H1 (cell line): ENCODE measurements at regions of chr11 and their contacts with region 1.

Region 1: GRCh38 chr11:8365216-8365941 is 101.7 kb upstream of the LMO1 start:
- DNase-seq: peak in 1 of 2 experiments; percentile 71
- H3K4me3 ChIP-seq: no peak overlapping the region
- H3K27ac ChIP-seq: no peak overlapping the region
- H3K4me1 ChIP-seq: no peaks in the 10 kb centered on the region
- H3K27me3 ChIP-seq: no peaks in the 10 kb centered on the region
- CTCF ChIP-seq: peak; percentile 12 to 38 (median 30)
- EP300 ChIP-seq: no peak
- POLR2A ChIP-seq: no peak
- RAD21 ChIP-seq: peak; percentile 21 to 38; a peak in 2 of 4 replicates

Region 2: GRCh38 chr11:8301622-8302021 is 63.8 kb before region 1 on chr11:
- CTCF ChIA-PET with region 1: no interaction called
- POLR2A ChIA-PET with region 1: no interaction called
- DNase-seq: no peak
- H3K4me3 ChIP-seq: no peak overlapping the region
- H3K27ac ChIP-seq: no peak overlapping the region
- H3K4me1 ChIP-seq: no peaks in the 10 kb centered on the region
- H3K27me3 ChIP-seq: no peaks in the 10 kb centered on the region; a peak in 1 of 7 replicates
- CTCF ChIP-seq: peak in 1 of 3 experiments; percentile 30; a peak in 1 of 4 replicates
- EP300 ChIP-seq: no peak
- POLR2A ChIP-seq: no peak
- RAD21 ChIP-seq: no peak

Region 3: DNA sequence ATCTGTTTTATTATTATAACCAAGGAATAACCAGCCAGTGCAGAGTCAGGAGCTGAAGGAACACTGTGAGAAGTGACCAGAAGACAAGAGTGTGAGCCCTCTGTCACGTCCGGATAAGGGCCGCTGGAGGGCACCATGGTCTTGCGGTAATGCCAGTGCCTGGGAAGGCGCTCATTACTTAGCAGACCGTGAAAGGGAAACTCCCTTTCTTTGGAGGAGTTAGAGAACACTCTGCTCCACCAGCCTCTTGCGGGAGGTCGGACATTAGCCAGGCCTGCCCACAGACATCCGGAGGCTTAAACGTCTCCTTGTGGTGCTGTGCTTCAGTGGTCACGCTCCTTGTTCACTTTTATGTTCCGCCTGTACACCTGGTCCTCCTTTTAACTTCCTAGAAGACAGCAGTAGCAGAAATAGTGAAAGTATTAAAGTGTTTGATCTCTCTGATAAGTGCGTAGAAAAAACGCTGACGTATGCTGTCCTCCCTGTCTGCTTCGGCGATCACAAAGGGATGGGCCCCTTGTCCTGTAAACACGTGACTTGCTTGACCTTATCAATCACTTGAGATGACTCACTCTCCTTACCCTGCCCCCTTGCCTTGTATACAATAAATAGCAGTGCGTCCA is 18.9 kb after region 1 on chr11:
- CTCF ChIA-PET with region 1: interaction called, 11 read pairs
- POLR2A ChIA-PET with region 1: no interaction called
- DNase-seq: no peak
- H3K4me3 ChIP-seq: no peak overlapping the region
- H3K27ac ChIP-seq: no peak overlapping the region
- H3K4me1 ChIP-seq: peaks cover 0 to 8% (median 0%) of the 10 kb centered on the region in 4 experiments; a peak in 3 of 7 replicates
- H3K27me3 ChIP-seq: no peaks in the 10 kb centered on the region
- CTCF ChIP-seq: peak; percentile 32 to 46 (median 44); a peak in 3 of 4 replicates
- EP300 ChIP-seq: no peak
- POLR2A ChIP-seq: no peak
- RAD21 ChIP-seq: peak; percentile 73 to 74